Right cardiac atrium (tissue), 5 donors: ENCODE measurements at regions of chr13 and their contacts with region 1.

Region 1: DNA sequence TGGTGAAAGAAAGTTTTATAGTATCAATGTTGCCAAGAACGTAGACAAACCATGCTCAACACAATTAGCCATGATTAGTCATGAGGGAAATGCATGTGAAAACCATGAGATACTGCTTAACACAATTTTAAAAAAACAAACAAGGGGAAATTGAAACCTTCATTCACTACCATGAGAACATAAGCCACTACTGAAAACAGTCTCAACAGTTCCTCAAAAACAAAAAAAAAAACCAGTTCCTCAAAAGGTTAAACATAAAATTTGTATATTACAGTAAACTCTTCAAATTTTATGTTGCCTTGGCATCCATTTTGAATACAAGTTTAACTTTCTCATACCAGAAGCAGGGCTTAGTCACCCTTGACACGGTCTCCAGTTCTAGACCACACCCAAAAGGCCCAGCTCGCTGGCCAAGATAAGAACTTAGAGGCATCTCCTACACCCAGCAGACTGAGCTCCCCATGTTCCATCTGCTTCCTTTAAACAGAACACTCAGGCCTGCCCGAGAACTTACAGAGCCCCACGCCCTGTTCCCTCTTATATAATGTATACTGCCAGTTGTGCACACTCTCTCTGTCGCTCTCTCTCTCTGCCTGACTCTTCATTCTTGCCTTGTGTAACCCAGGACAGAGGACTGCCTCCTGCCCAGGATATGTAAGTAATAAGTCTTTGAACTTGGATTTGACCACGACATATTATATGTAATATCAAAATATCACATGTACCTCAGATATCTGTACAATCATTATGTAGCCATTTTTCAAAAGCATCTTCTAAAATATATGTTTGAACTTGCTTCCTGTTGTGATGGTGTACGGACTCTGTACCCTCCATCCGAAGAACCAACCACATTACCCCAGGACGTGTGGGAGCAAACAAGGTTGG is 67.4 kb downstream of the STK24 start:
- DNase-seq: peak in 2 of 3 donors; percentile 84 to 86
- ATAC-seq: peak; percentile 82 to 88
- H3K4me3 ChIP-seq: no peak overlapping the region
- H3K27ac ChIP-seq: peak overlapping the region; percentile 81
- H3K4me1 ChIP-seq: peaks cover 30% of the 10 kb centered on the region
- H3K27me3 ChIP-seq: no peaks in the 10 kb centered on the region

Region 2: GRCh38 chr13:98565726-98566565 is 56.4 kb after region 1 on chr13:
- intact Hi-C with region 1: loop called in 2 of 4 experiments (anchors 5 to 10 kb)
- DNase-seq: peak; percentile 49 to 80 (median 74)
- ATAC-seq: peak; percentile 83 to 90
- H3K4me3 ChIP-seq: no peak overlapping the region
- H3K27ac ChIP-seq: peak overlapping the region; percentile 61
- H3K4me1 ChIP-seq: peaks cover 29% of the 10 kb centered on the region
- H3K27me3 ChIP-seq: no peaks in the 10 kb centered on the region

Region 3: DNA sequence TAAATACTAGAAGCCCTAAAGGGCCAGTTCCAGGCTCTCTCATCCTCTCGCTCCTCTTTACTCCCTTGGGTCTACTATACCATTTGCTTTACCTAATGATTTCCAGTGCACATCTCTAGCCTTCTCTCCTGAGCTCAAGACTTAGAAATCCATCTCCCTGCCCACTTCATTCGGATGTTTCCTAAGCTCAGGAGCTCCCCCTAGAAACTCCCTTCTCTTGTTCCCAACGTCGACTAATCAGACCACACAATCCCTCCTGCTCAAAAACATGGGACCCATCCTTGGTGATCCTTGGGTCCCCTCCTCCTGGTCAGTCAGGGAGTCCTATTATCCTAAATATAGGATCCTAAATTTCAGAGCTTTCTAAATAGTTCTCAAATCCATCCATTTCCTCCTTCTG is 88.5 kb after region 1 on chr13:
- intact Hi-C with region 1: no loop called
- DNase-seq: no peak
- ATAC-seq: no peak
- H3K4me3 ChIP-seq: no peak overlapping the region
- H3K27ac ChIP-seq: no peak overlapping the region
- H3K4me1 ChIP-seq: no peaks in the 10 kb centered on the region
- H3K27me3 ChIP-seq: no peaks in the 10 kb centered on the region